Aorta (tissue), 5 donors: ENCODE measurements at regions of chr4 and their contacts with region 1.

Region 1: DNA sequence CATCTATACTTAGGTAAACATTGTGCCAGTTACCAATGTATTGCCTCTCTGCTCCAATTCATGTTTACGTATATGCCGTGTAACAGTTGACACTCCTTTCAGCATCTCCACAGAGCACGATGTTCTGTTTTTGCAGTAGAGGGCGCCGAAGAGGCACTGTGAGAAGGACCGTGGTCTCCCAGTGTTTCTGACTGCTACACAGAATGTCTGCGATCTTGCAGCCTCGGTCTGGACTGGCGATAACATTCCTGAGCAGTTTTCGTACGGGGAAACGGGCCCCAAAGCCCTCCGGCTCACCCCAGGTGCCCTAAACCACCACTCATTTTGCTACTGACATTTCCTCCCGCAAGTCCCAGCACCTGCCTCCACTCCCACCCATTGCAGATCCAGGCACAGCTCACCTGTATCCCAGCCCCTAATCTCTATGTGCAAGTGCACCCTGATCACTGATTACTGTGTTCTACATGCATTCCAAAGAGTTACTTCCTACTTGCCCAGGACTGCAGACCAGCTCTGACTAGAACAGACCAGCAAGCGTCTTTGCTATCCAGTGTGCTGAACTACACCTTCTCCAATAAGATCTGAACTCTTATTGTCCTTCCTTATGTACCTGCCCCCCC is 12.4 kb upstream of the NFXL1 start:
- DNase-seq: peak in 1 of 2 donors; percentile 45
- ATAC-seq: peak; percentile 71
- H3K4me3 ChIP-seq: no peak overlapping the region
- H3K27ac ChIP-seq: no peak overlapping the region
- H3K4me1 ChIP-seq: no peaks in the 10 kb centered on the region
- H3K27me3 ChIP-seq: no peaks in the 10 kb centered on the region

Region 2: GRCh38 chr4:48079972-48080391 is 153.2 kb after region 1 on chr4:
- intact Hi-C with region 1: loop called (anchors 5 to 10 kb)
- DNase-seq: no peak
- ATAC-seq: no peak
- H3K4me3 ChIP-seq: no peak overlapping the region
- H3K27ac ChIP-seq: no peak overlapping the region
- H3K4me1 ChIP-seq: no peaks in the 10 kb centered on the region
- H3K27me3 ChIP-seq: no peaks in the 10 kb centered on the region